ENCODE measurements at regions of chr11 and their contacts with region 1.

Region 1: GRCh38 chr11:124953753-124954589 is at the start of gene CCDC15:
- DNase-seq: peak; percentile 98
- H3K4me3 ChIP-seq: peak within 1 kb of the TSS; percentile 58 to 69 (median 62)
- H3K27ac ChIP-seq: peak within 1 kb of the TSS; percentile 80 to 89 (median 82)
- H3K4me1 ChIP-seq: peaks cover 0 to 13% (median 10%) of the 10 kb centered on the region in 4 donors
- H3K27me3 ChIP-seq: no peaks in the 10 kb centered on the region
- CTCF ChIP-seq: no peak
- EP300 ChIP-seq: peak in 1 of 4 donors; percentile 35
- POLR2A ChIP-seq: peak; percentile 79 to 84
- total RNA-seq, gene CCDC15: 0.41 to 0.99 (median 0.77) TPM

Region 2: DNA sequence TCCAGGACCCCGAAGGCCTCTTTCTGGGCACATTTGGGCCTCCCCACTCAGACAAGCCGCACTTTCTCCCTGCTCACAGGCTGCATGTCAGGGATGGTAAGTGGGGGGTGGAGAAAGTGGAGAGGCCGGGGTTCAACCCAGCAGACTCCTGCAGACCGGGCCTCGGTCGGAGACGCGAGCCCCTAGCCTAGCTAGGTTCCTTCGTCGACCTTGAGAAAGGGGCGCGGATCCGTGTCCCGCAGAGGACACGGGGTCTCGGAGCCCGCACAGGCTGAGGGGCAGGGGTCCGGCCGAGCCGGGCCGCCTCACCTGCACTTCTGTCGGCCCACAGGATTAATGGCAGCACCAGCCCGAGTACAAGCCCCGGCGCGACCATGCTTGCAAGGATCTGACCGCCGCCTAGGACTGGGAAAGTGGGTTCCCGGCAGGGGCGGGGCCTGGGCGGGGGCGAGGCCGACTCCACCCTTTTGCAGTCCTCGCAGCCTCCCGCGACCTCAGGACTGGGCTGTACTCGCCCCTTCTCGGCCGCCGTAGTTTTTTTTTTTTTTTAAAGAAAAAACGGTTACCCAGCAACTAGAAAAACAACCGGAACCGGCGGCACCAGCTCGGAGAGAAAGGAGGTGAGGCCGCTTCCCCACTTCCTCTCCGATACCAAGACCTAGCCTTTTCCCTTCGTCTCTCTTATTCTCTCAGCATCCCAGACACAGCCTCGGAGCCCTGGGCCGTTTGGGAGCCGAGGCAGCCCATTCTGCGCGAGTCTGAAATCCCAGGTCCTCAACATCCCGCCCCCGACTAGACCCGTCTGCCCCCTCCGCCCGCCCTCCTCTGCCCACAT is 280.4 kb before region 1 on chr11 and contains the starts of genes SIAE and SPA17:
- intact Hi-C with region 1: loop called (anchors 2 kb)
- DNase-seq: peak; percentile 97
- H3K4me3 ChIP-seq: peak within 1 kb of the TSS; percentile 60 to 82 (median 72)
- H3K27ac ChIP-seq: peak within 1 kb of the TSS; percentile 79 to 87 (median 86)
- H3K4me1 ChIP-seq: peaks cover 0 to 17% (median 12%) of the 10 kb centered on the region in 4 donors
- H3K27me3 ChIP-seq: no peaks in the 10 kb centered on the region
- CTCF ChIP-seq: no peak
- EP300 ChIP-seq: peak in 3 of 4 donors; percentile 26 to 56 (median 52)
- POLR2A ChIP-seq: peak in 1 of 2 donors; percentile 57
- total RNA-seq, gene SIAE: 2.5 to 7.2 (median 4.3) TPM
- total RNA-seq, gene SPA17: 2.3 to 7.1 (median 5.2) TPM

Region 3: DNA sequence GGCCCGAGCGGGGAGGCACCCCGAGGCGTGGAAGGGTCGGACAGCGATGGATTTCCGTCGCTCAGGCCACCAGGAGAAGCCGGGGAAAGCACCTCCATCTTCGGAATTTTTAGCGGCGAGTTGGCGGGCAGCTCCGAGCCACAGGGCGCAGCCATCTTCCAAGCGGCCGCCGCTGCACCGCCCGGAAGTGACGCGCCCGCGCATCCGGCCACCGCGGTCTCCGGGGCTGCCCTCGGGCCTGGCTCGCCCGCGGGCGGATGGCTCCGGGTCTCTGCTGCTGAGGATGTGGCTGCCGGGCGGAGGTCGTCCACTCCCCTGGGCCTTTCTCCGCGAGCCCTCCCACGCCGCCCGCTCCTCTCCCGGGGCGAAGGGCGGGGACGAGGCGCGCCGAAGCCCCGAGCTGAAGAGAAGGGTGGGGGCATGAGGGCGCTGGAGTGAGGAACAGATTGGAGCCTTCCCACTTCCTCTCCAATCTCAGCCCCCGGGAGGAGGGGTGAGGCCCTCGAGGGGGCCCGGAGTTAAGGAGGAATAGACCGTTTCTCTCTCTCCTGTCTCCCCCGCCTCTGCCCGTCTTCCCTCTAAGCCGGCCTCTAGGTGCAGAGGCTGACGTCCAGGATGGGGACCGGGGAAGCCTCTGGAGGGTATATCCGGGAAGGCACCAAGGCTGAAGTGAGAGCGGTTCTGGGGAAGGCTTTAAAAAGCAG is 153.6 kb before region 1 on chr11 and contains the start of gene MSANTD2:
- intact Hi-C with region 1: loop called (anchors 5 kb)
- DNase-seq: peak; percentile 91
- H3K4me3 ChIP-seq: peak within 1 kb of the TSS; percentile 63 to 96 (median 91)
- H3K27ac ChIP-seq: peak within 1 kb of the TSS; percentile 93 to 98 (median 97)
- H3K4me1 ChIP-seq: peaks cover 0 to 32% (median 28%) of the 10 kb centered on the region in 4 donors
- H3K27me3 ChIP-seq: no peaks in the 10 kb centered on the region
- CTCF ChIP-seq: no peak
- EP300 ChIP-seq: no peak
- POLR2A ChIP-seq: peak; percentile 60 to 68
- total RNA-seq, gene MSANTD2: 8.6 to 23.8 (median 16.0) TPM

Region 4: GRCh38 chr11:124976994-124977393 is 23.0 kb after region 1 on chr11:
- intact Hi-C with region 1: no loop called
- DNase-seq: no peak
- H3K4me3 ChIP-seq: no peak overlapping the region
- H3K27ac ChIP-seq: no peak overlapping the region
- H3K4me1 ChIP-seq: no peaks in the 10 kb centered on the region
- H3K27me3 ChIP-seq: no peaks in the 10 kb centered on the region
- CTCF ChIP-seq: no peak
- EP300 ChIP-seq: no peak
- POLR2A ChIP-seq: no peak

Region 5: GRCh38 chr11:125111343-125112207 is 157.6 kb after region 1 on chr11 and contains the start of gene TMEM218:
- intact Hi-C with region 1: loop called (anchors 5 kb)
- DNase-seq: peak; percentile 100
- H3K4me3 ChIP-seq: peak within 1 kb of the TSS; percentile 60 to 74 (median 70)
- H3K27ac ChIP-seq: peak within 1 kb of the TSS; percentile 82 to 86 (median 84)
- H3K4me1 ChIP-seq: peaks cover 0 to 9% (median 9%) of the 10 kb centered on the region in 4 donors
- H3K27me3 ChIP-seq: no peaks in the 10 kb centered on the region
- CTCF ChIP-seq: no peak
- EP300 ChIP-seq: no peak
- POLR2A ChIP-seq: no peak
- total RNA-seq, gene TMEM218: 14.0 to 34.6 (median 26.0) TPM

Region 6: GRCh38 chr11:125592305-125593112 is 638.5 kb after region 1 on chr11 and contains the start of gene STT3A:
- intact Hi-C with region 1: loop called (anchors 10 kb)
- DNase-seq: peak; percentile 100
- H3K4me3 ChIP-seq: peak within 1 kb of the TSS; percentile 71 to 96 (median 78)
- H3K27ac ChIP-seq: peak within 1 kb of the TSS; percentile 96 to 98 (median 98)
- H3K4me1 ChIP-seq: peaks cover 0 to 33% (median 22%) of the 10 kb centered on the region in 4 donors
- H3K27me3 ChIP-seq: no peaks in the 10 kb centered on the region
- CTCF ChIP-seq: no peak
- EP300 ChIP-seq: no peak
- POLR2A ChIP-seq: peak; percentile 85 to 89
- total RNA-seq, gene STT3A: 34.8 to 60.3 (median 52.9) TPM

Measured in sigmoid colon (tissue), 7 donors.